HCT116 (cell line): ENCODE measurements at regions of chr19 and their contacts with region 1.

Region 1: GRCh38 chr19:7595466-7596133 is at the start of gene CAMSAP3:
- DNase-seq: no peak
- ATAC-seq: peak; percentile 97
- H3K4me3 ChIP-seq: peak within 1 kb of the TSS; percentile 64 to 69
- H3K27ac ChIP-seq: peak within 1 kb of the TSS; percentile 58; the same call in 1 of the 2 replicates
- H3K4me1 ChIP-seq: peaks cover 4 to 19% of the 10 kb centered on the region in 2 experiments
- H3K27me3 ChIP-seq: no peaks in the 10 kb centered on the region
- CTCF ChIP-seq: no peak
- POLR2A ChIP-seq: peak; percentile 53
- RAD21 ChIP-seq: no peak
- total RNA-seq, gene CAMSAP3: 24.0 TPM

Region 2: GRCh38 chr19:5904352-5905113 is 1691.1 kb before region 1 on chr19 and contains the start of gene VMAC:
- CTCF ChIA-PET with region 1: no interaction called
- POLR2A ChIA-PET with region 1: no interaction called
- RAD21 ChIA-PET with region 1: no interaction called
- intact Hi-C with region 1: no loop called
- DNase-seq: peak; percentile 100
- ATAC-seq: peak; percentile 82
- H3K4me3 ChIP-seq: peak within 1 kb of the TSS; percentile 100
- H3K27ac ChIP-seq: peak within 1 kb of the TSS; percentile 94
- H3K4me1 ChIP-seq: peaks cover 9 to 24% of the 10 kb centered on the region in 2 experiments; a peak in 3 of 4 replicates
- H3K27me3 ChIP-seq: no peaks in the 10 kb centered on the region
- CTCF ChIP-seq: no peak
- POLR2A ChIP-seq: peak; percentile 37
- RAD21 ChIP-seq: no peak
- total RNA-seq, gene VMAC: 2.1 TPM

Region 3: GRCh38 chr19:7605490-7606222 is 10.1 kb after region 1 on chr19:
- CTCF ChIA-PET with region 1: no interaction called
- POLR2A ChIA-PET with region 1: interaction called, 10 read pairs
- RAD21 ChIA-PET with region 1: no interaction called
- intact Hi-C with region 1: no loop called
- DNase-seq: peak; percentile 79
- ATAC-seq: peak; percentile 85
- H3K4me3 ChIP-seq: no peak overlapping the region
- H3K27ac ChIP-seq: peak overlapping the region; percentile 9; the same call in 1 of the 2 replicates
- H3K4me1 ChIP-seq: peaks cover 10 to 40% of the 10 kb centered on the region in 2 experiments
- H3K27me3 ChIP-seq: no peaks in the 10 kb centered on the region
- CTCF ChIP-seq: no peak
- POLR2A ChIP-seq: no peak
- RAD21 ChIP-seq: no peak